GM23248 (cell line): ENCODE measurements at regions of chr7 and their contacts with region 1.

Region 1: GRCh38 chr7:12524794-12525386 is 45.6 kb upstream of the SCIN start:
- DNase-seq: peak; percentile 64
- H3K4me3 ChIP-seq: no peak overlapping the region
- H3K27ac ChIP-seq: no peak overlapping the region
- H3K4me1 ChIP-seq: no peaks in the 10 kb centered on the region
- H3K27me3 ChIP-seq: peaks cover 28% of the 10 kb centered on the region

Region 2: DNA sequence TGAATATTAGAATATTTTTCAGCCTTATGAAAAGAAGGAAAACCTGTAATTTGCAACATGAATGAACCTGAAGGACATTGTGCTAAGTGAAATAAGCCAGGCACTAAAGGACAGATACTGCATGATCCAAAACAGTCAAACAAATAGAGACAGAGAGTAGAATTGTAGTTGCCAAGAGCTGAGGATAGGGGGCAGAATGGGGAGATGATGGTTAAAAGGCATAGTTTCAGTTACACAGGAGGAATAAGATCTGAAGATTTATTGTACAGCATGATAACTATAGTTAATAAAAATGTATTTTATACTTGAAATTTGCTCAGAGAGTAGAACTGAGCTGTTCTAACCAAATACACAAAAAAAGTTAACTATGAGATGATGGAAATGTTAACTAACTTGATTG is 462.8 kb before region 1 on chr7:
- in situ Hi-C with region 1: no loop called
- DNase-seq: peak; percentile 20
- H3K4me3 ChIP-seq: no peak overlapping the region
- H3K27ac ChIP-seq: no peak overlapping the region
- H3K4me1 ChIP-seq: no peaks in the 10 kb centered on the region
- H3K27me3 ChIP-seq: no peaks in the 10 kb centered on the region

Region 3: DNA sequence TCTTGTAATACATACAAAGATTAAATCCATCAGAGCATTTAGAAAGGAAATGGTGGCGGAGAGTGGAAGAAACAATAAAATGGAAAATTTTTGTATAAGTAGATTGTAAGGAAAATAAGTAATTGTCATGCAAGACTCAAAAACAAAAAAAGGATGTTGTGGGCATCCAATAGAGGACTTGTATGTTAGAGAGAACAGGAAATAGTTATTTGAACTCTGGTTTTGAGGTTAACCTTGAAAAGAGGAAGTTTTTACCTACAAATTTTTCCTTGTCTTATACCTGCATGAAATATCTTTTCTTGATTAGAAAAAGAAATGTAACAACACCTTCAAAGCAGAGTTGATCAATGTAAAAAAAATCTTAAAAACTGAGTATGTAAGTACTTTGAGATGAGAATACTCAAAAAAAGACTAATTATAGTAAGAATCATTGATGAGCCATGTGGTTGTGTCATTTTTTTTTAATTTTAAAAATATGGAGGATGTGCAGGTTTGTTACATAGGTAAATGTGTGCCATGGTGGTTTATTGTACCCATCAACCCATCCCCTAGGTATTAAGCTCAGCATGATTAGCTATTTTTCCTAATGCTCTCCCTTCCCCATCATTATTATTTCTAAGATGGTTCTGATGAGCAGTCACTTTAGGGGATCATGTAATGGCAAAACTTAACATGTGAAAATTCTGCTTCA is 301.9 kb before region 1 on chr7:
- in situ Hi-C with region 1: no loop called
- DNase-seq: no peak
- H3K4me3 ChIP-seq: no peak overlapping the region
- H3K27ac ChIP-seq: no peak overlapping the region
- H3K4me1 ChIP-seq: no peaks in the 10 kb centered on the region
- H3K27me3 ChIP-seq: no peaks in the 10 kb centered on the region

Region 4: DNA sequence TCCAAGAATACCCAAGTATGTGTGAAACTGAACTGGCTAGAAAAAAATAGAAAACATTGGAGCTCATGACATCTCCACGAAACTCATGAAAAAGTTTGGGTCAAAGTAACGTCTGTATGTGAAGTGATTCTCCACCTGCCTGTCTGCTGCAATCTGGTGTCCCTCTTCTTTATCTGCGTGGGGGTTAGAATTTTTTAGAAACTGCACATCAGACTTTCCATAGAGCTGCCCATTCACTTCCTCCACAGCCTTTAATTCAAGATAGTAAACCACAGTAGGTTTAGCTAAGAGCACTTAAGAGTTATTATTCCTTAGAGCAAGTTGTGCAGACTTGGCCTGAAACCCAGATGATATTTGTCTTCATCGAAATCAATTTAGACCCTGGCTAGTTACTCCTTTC is 100.9 kb after region 1 on chr7:
- in situ Hi-C with region 1: loop called (anchors 5 kb)
- DNase-seq: no peak
- H3K4me3 ChIP-seq: no peak overlapping the region
- H3K27ac ChIP-seq: no peak overlapping the region
- H3K4me1 ChIP-seq: no peaks in the 10 kb centered on the region
- H3K27me3 ChIP-seq: no peaks in the 10 kb centered on the region; the same call in 1 of the 2 replicates